HepG2 (cell line): ENCODE measurements at regions of chr1 and their contacts with region 1.

Region 1: GRCh38 chr1:100459358-100460114 is 78.4 kb upstream of the GPR88 start:
- DNase-seq: peak; percentile 66
- ATAC-seq: peak; percentile 96
- H3K4me3 ChIP-seq: no peak overlapping the region
- H3K27ac ChIP-seq: no peak overlapping the region
- H3K4me1 ChIP-seq: peaks cover 10% of the 10 kb centered on the region
- H3K27me3 ChIP-seq: no peaks in the 10 kb centered on the region
- CTCF ChIP-seq: peak; percentile 91
- EP300 ChIP-seq: no peak
- POLR2A ChIP-seq: no peak
- RAD21 ChIP-seq: peak; percentile 78

Region 2: DNA sequence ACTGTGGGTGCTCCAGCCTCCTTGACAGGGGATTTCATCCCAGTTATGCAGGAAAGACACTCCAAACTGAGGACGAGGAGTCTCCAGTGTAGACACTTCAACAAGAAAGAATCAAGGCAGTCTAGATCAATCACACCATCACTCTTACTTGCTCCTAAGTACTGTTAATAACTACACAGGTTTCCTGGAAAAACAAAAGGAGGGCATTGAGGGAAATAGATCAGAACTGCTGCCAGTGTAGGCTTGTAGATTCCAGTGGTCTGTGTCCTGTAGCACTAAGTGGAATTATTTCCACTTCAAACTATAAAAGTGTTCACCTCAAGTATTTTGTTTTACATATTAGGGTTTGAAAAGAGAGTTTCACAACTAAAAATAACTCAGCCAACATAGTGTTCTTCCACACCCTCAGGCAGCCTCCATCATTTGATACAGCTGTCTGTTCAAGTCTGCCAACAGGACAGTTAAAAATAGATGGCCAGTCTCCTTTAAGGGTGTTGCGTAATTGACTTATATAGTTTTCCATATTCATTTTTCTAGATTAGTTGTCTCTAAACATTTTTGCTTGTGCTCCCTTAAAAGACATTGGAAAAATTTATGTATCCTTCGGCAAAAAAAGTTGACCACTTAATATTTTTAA is 641.4 kb before region 1 on chr1:
- CTCF ChIA-PET with region 1: no interaction called
- POLR2A ChIA-PET with region 1: no interaction called
- in situ Hi-C with region 1: loop called (anchors 10 kb)
- intact Hi-C with region 1: no loop called
- DNase-seq: no peak
- ATAC-seq: no peak
- H3K4me3 ChIP-seq: no peak overlapping the region
- H3K27ac ChIP-seq: no peak overlapping the region
- H3K4me1 ChIP-seq: peaks cover 12% of the 10 kb centered on the region
- H3K27me3 ChIP-seq: peaks cover 0 to 4% of the 10 kb centered on the region in 2 experiments; a peak in 1 of 5 replicates
- CTCF ChIP-seq: no peak
- EP300 ChIP-seq: no peak
- POLR2A ChIP-seq: no peak
- RAD21 ChIP-seq: no peak

Region 3: DNA sequence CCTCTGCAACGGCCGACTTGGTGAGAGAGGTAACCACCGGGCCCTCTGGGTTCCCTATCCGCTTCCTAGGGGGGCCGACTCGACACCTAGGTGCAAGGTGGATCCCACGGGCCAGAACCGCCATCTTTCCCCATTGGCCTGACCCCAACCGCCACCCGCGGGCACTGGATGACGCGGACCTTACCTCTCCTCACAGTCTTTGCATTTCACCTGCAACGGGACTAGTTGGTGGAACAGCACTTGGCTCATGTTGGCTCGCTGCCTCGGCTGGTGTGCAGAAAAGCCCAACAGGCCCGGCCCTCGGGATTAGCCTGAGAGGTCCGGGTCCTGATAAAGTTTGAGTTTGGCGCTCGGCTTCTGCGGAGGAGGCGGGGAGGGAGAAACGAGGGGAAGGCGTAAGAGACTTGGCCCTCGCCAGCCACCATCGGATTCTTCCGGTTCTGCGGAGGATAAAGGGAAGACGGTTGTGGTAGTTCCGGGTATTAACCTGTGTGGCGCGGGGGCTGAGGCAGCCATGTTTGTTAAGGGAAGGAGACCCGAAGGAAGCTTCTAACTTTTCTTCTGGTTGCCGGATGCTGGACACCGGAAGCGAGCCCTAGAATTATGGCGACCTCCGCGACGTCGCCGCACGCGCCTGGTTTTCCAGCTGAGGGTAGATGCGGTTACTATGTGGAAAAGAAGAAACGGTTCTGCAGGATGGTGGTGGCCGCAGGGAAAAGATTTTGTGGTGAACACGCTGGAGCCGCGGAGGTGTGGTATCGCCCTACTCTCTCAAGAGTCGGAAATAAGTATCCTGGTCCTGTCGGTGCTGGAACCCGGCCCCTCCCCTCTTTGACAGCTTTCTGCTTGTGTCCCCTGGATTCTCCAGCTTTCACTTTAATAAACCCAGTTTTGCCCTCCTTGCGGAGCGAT is 326.7 kb before region 1 on chr1 and contains the starts of genes SASS6 and TRMT13:
- CTCF ChIA-PET with region 1: no interaction called
- POLR2A ChIA-PET with region 1: no interaction called
- in situ Hi-C with region 1: no loop called
- intact Hi-C with region 1: loop called (anchors 5 kb)
- DNase-seq: peak; percentile 97
- ATAC-seq: peak; percentile 94
- H3K4me3 ChIP-seq: peak within 1 kb of the TSS; percentile 82 to 97 (median 95)
- H3K27ac ChIP-seq: peak within 1 kb of the TSS; percentile 87
- H3K4me1 ChIP-seq: peaks cover 40% of the 10 kb centered on the region
- H3K27me3 ChIP-seq: no peaks in the 10 kb centered on the region
- CTCF ChIP-seq: 0 out of 2 replicates have a peak, but pooled peaks have one; percentile 1
- EP300 ChIP-seq: peak in 1 of 2 experiments; percentile 42; a peak in 1 of 4 replicates
- POLR2A ChIP-seq: peak in 1 of 2 experiments; percentile 62; a peak in 2 of 4 replicates
- RAD21 ChIP-seq: no peak
- total RNA-seq, gene SASS6: 10.7 and 18.0 TPM in 2 replicates
- total RNA-seq, gene TRMT13: 12.4 and 15.6 TPM in 2 replicates

Region 4: GRCh38 chr1:100335436-100335835 is 124.1 kb before region 1 on chr1:
- CTCF ChIA-PET with region 1: no interaction called
- POLR2A ChIA-PET with region 1: no interaction called
- in situ Hi-C with region 1: no loop called
- intact Hi-C with region 1: no loop called
- DNase-seq: no peak
- ATAC-seq: no peak
- H3K4me3 ChIP-seq: no peak overlapping the region
- H3K27ac ChIP-seq: no peak overlapping the region
- H3K4me1 ChIP-seq: no peaks in the 10 kb centered on the region
- H3K27me3 ChIP-seq: no peaks in the 10 kb centered on the region
- CTCF ChIP-seq: no peak
- EP300 ChIP-seq: no peak
- POLR2A ChIP-seq: no peak
- RAD21 ChIP-seq: no peak

Region 5: DNA sequence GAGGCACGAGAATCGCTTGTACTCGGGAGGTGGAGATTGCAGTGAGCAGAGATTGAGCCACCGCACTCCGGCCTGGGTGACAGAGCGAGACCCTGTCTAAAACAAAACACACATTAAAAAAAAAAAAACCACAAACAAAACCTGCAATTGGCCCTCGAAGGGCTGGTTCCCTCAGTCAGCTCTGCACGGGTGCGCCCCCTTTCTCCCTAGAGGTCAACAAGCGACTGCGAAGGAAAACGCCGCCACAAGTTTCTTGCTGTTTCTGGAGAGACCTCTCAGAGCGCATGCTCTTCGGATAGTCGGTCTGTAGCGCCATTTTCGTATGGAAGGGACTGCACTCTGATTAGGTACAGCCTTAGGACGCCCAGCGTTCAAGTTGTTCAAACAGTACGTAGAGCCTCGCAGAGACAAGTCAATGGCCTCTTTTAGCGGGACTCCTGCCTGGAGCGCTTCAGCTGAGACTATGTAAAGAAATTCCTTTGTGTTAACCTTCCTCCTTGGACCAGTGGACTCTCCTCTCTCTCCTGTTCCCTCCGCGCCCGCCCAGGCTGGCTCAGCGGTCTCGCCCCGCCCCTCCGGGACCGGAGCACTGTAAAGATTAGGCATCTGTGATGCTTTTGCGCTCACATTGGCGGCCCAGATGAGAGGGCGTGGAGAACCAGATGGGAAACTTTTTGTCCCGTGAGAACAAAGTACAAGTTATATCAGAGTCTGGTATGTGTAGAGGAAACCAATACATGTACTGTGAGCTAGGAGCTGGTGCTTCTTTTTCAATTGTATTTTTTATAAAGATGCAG is 108.2 kb before region 1 on chr1:
- CTCF ChIA-PET with region 1: no interaction called
- POLR2A ChIA-PET with region 1: no interaction called
- in situ Hi-C with region 1: no loop called
- intact Hi-C with region 1: loop called (anchors 5 kb)
- DNase-seq: peak; percentile 93
- ATAC-seq: peak; percentile 79
- H3K4me3 ChIP-seq: peak overlapping the region; percentile 85 to 94 (median 89)
- H3K27ac ChIP-seq: peak overlapping the region; percentile 95
- H3K4me1 ChIP-seq: peaks cover 44% of the 10 kb centered on the region
- H3K27me3 ChIP-seq: no peaks in the 10 kb centered on the region; a peak in 1 of 5 replicates
- CTCF ChIP-seq: peak; percentile 68
- EP300 ChIP-seq: no peak
- POLR2A ChIP-seq: peak; percentile 58 to 87
- RAD21 ChIP-seq: no peak

Region 6: DNA sequence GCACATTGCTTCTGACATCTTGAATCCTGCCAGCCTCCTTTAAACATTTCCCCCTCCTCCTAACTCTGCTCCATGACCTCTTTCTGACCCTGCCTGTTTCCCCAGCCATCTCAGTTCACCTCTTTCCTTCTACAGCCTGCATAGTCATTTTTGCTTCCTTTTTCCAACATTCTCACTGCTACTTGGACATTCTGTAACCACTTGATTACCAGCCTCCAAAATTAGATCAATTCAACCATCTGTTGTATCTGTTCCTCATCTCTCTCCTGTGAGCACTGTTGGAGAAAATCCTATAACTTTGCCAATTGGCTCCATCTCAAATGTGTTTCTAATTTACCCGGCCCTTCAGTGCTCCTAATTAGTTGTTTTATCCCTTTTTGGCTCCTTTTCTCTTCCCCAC is 50.9 kb after region 1 on chr1:
- CTCF ChIA-PET with region 1: no interaction called
- POLR2A ChIA-PET with region 1: no interaction called
- in situ Hi-C with region 1: no loop called
- intact Hi-C with region 1: no loop called
- DNase-seq: no peak
- ATAC-seq: no peak
- H3K4me3 ChIP-seq: no peak overlapping the region
- H3K27ac ChIP-seq: no peak overlapping the region
- H3K4me1 ChIP-seq: peaks cover 6% of the 10 kb centered on the region
- H3K27me3 ChIP-seq: no peaks in the 10 kb centered on the region
- CTCF ChIP-seq: no peak
- EP300 ChIP-seq: no peak
- POLR2A ChIP-seq: no peak
- RAD21 ChIP-seq: no peak

Region 7: GRCh38 chr1:100536031-100536430 is 76.5 kb after region 1 on chr1:
- CTCF ChIA-PET with region 1: no interaction called
- POLR2A ChIA-PET with region 1: no interaction called
- in situ Hi-C with region 1: no loop called
- intact Hi-C with region 1: no loop called
- DNase-seq: no peak
- ATAC-seq: no peak
- H3K4me3 ChIP-seq: no peak overlapping the region
- H3K27ac ChIP-seq: no peak overlapping the region
- H3K4me1 ChIP-seq: no peaks in the 10 kb centered on the region
- H3K27me3 ChIP-seq: peaks cover 3 to 13% of the 10 kb centered on the region in 2 experiments; a peak in 2 of 5 replicates
- CTCF ChIP-seq: no peak
- EP300 ChIP-seq: no peak
- POLR2A ChIP-seq: no peak
- RAD21 ChIP-seq: no peak

Region 8: DNA sequence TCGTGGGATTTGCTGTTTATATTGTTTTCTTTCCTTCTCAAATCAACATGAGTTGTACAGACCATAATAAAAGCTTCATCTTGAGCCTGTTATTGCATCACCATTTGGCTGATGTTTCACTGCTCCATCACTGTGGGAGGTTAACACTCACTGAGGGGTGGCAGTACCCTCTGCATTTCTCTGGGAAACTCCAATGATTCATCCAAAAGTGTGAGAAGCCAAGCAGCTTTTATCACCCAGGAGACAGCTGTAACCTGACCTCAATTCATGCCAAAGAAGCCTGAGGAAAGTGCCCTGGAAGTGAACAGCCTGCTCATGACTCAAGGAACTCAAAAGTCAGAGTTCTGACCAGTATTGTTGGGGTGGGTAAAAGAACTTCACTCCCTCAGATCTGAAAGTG is 162.5 kb after region 1 on chr1:
- CTCF ChIA-PET with region 1: no interaction called
- POLR2A ChIA-PET with region 1: no interaction called
- in situ Hi-C with region 1: no loop called
- intact Hi-C with region 1: loop called (anchors 5 kb)
- DNase-seq: no peak
- ATAC-seq: no peak
- H3K4me3 ChIP-seq: no peak overlapping the region
- H3K27ac ChIP-seq: no peak overlapping the region
- H3K4me1 ChIP-seq: no peaks in the 10 kb centered on the region
- H3K27me3 ChIP-seq: no peaks in the 10 kb centered on the region; a peak in 1 of 5 replicates
- CTCF ChIP-seq: no peak
- EP300 ChIP-seq: no peak
- POLR2A ChIP-seq: no peak
- RAD21 ChIP-seq: no peak